ENCODE measurements at regions of chr10 and their contacts with region 1.

Region 1: GRCh38 chr10:15370856-15371701 is at the start of gene FAM171A1:
- DNase-seq: no peak
- H3K4me3 ChIP-seq: peak within 1 kb of the TSS; percentile 63 to 83
- H3K27ac ChIP-seq: peak within 1 kb of the TSS; percentile 46 to 65
- H3K4me1 ChIP-seq: peaks cover 0 to 17% (median 9%) of the 10 kb centered on the region in 4 donors
- H3K27me3 ChIP-seq: no peaks in the 10 kb centered on the region
- CTCF ChIP-seq: peak; percentile 4 to 36

Region 2: DNA sequence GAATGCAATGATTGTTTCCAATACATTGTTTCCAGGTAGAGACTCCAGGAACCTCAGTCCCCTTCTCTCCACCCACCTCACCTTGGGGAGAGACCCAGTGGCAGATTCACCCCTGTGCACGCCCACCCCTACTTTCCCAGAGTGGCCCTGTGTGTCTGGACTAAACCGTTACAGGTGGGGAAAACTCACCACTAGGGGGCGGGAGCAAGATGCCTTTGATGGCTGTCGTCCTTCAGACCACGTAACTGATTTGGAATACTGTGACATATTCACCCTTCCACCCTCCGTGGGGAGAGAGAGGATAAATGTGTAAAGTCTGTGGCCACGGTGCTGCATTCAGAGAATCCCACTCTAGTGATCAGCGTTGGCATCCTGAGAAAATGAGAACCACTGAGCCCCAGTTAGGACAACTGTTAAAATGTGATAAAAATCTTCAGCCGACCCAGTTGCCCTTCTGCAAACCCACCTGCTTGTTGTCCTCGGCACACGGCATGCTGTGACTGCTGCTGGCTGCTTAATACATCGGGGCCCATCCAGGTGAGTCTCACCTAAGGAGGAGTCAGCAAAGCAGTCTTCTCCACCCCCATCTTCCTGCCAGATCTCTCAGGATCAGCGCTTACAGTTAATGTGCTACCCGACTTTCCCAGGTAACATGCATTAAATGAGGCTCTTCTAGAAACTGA is 161.1 kb before region 1 on chr10:
- intact Hi-C with region 1: loop called (anchors 10 kb)
- DNase-seq: peak; percentile 79 to 82
- H3K4me3 ChIP-seq: no peak overlapping the region
- H3K27ac ChIP-seq: no peak overlapping the region
- H3K4me1 ChIP-seq: no peaks in the 10 kb centered on the region
- H3K27me3 ChIP-seq: no peaks in the 10 kb centered on the region
- CTCF ChIP-seq: peak; percentile 74 to 82

Region 3: GRCh38 chr10:15439341-15439842 is 68.3 kb after region 1 on chr10:
- intact Hi-C with region 1: no loop called
- DNase-seq: peak in 1 of 2 donors; percentile 36
- H3K4me3 ChIP-seq: peak overlapping the region; percentile 27
- H3K27ac ChIP-seq: peak overlapping the region; percentile 61 to 73
- H3K4me1 ChIP-seq: peaks cover 0 to 28% (median 8%) of the 10 kb centered on the region in 4 donors
- H3K27me3 ChIP-seq: no peaks in the 10 kb centered on the region
- CTCF ChIP-seq: peak; percentile 40 to 46

Measured in tibial artery (tissue), 4 donors.